ENCODE measurements at regions of chr9 and their contacts with region 1.

Region 1: DNA sequence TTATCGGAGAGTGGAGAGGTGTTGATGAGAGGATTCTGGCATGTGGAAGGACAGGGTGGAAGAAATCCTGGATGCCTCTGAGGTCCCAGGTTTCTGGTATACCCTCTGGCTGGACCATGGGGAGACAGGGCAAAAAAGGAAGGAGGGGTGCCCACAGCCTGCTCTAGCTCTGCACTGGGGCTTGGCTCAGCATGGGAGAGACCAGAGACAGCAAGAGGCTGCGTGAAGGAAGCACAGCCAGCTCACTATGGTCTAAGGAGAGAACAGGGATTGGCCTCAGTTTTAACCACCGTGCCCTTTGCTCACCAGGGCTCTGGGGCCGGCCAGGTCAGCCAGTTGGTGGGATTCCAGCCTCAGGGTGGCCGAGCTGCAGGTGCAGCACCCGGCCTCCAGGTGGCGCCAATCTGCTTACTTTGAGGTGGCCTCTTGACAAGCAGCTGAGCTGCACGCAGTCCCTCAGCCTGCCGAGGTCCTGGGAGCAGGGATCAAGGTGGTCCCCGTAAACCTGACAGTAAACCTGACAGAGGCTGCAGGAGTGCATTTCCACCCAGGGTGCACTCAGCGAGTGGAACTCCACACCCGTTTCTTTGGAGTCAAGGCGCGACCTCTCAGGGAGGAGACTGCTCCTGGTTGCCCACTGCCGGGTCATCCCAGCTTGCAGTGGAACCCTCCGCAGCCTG is 25.0 kb upstream of the SPTLC1 start:
- DNase-seq: peak; percentile 79
- ATAC-seq: peak; percentile 68
- H3K4me3 ChIP-seq: peak overlapping the region in 2 of 5 experiments; percentile 19 to 48
- H3K4me3 Mint-ChIP-seq: peak overlapping the region; percentile 79
- H3K27ac ChIP-seq: no peak overlapping the region
- H3K27ac Mint-ChIP-seq: no peak overlapping the region
- H3K4me1 ChIP-seq: peaks cover 9 to 16% of the 10 kb centered on the region in 2 donors
- H3K4me1 Mint-ChIP-seq: peaks cover 12% of the 10 kb centered on the region
- H3K27me3 ChIP-seq: peaks cover 0 to 29% (median 8%) of the 10 kb centered on the region in 4 experiments
- H3K27me3 Mint-ChIP-seq: peaks cover 43% of the 10 kb centered on the region
- CTCF ChIP-seq: peak; percentile 95

Region 2: GRCh38 chr9:92115071-92115858 is 24.9 kb before region 1 on chr9 and contains the start of gene SPTLC1:
- CTCF ChIA-PET with region 1: interaction called, 10 read pairs
- POLR2A ChIA-PET with region 1: no interaction called
- intact Hi-C with region 1: no loop called
- DNase-seq: peak; percentile 97
- ATAC-seq: peak; percentile 98
- H3K4me3 ChIP-seq: peak within 1 kb of the TSS; percentile 63 to 91 (median 83)
- H3K4me3 Mint-ChIP-seq: peak within 1 kb of the TSS; percentile 99
- H3K27ac ChIP-seq: peak within 1 kb of the TSS; percentile 81 to 96
- H3K27ac Mint-ChIP-seq: peak within 1 kb of the TSS; percentile 99
- H3K4me1 ChIP-seq: peaks cover 15 to 16% of the 10 kb centered on the region in 2 donors
- H3K4me1 Mint-ChIP-seq: peaks cover 29% of the 10 kb centered on the region
- H3K27me3 ChIP-seq: no peaks in the 10 kb centered on the region
- H3K27me3 Mint-ChIP-seq: no peaks in the 10 kb centered on the region
- CTCF ChIP-seq: no peak
- total RNA-seq, gene SPTLC1: 53.5 and 57.3 TPM in 2 replicates

Region 3: GRCh38 chr9:92122800-92123199 is 17.4 kb before region 1 on chr9:
- CTCF ChIA-PET with region 1: interaction called, 27 read pairs
- POLR2A ChIA-PET with region 1: no interaction called
- intact Hi-C with region 1: no loop called
- DNase-seq: no peak
- ATAC-seq: no peak
- H3K4me3 ChIP-seq: no peak overlapping the region
- H3K4me3 Mint-ChIP-seq: no peak overlapping the region
- H3K27ac ChIP-seq: no peak overlapping the region
- H3K27ac Mint-ChIP-seq: no peak overlapping the region
- H3K4me1 ChIP-seq: no peaks in the 10 kb centered on the region
- H3K4me1 Mint-ChIP-seq: no peaks in the 10 kb centered on the region
- H3K27me3 ChIP-seq: peaks cover 0 to 4% (median 0%) of the 10 kb centered on the region in 4 experiments
- H3K27me3 Mint-ChIP-seq: peaks cover 12% of the 10 kb centered on the region
- CTCF ChIP-seq: no peak

Region 4: GRCh38 chr9:92634712-92635605 is 494.7 kb after region 1 on chr9:
- CTCF ChIA-PET with region 1: interaction called, 39 read pairs
- POLR2A ChIA-PET with region 1: no interaction called
- intact Hi-C with region 1: no loop called
- DNase-seq: peak; percentile 71
- ATAC-seq: peak; percentile 68
- H3K4me3 ChIP-seq: no peak overlapping the region
- H3K4me3 Mint-ChIP-seq: no peak overlapping the region
- H3K27ac ChIP-seq: no peak overlapping the region
- H3K27ac Mint-ChIP-seq: no peak overlapping the region
- H3K4me1 ChIP-seq: no peaks in the 10 kb centered on the region
- H3K4me1 Mint-ChIP-seq: no peaks in the 10 kb centered on the region
- H3K27me3 ChIP-seq: no peaks in the 10 kb centered on the region
- H3K27me3 Mint-ChIP-seq: no peaks in the 10 kb centered on the region
- CTCF ChIP-seq: peak; percentile 82

Measured in B cell (primary cell).